ENCODE measurements at regions of chr9 and their contacts with region 1.

Region 1: DNA sequence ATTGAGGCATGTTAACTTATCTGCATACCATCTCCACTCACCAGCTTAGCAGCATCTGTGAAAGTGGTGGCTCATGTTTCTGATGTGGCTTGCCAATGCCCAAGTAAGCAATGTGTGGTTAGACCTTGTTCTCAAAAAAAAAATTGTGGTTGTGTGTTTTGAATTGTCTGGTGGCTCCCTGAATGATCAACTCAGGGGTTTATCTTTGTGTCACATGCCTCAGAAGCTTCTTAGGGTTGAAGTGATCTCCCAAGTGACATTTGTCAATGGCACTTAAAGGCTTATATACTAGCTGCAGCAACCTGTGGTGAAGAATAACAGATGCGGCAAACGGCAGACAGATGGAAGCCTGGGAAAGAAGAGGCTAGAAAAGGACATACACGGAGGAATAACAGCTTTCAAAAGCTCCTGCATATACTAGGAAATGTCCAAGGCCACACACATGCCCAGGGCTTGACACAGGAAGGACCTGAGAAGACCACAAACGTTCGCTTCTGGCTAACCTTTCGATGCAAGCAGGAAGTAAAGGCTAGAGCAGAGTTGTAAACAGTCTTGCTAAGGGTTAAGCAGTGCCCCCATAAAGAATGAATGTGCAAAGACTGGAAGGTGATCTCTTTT is 42.2 kb upstream of the FSD1L start:
- DNase-seq: peak; percentile 84
- ATAC-seq: peak; percentile 91
- H3K4me3 Mint-ChIP-seq: peak overlapping the region; percentile 65
- H3K27ac Mint-ChIP-seq: peak overlapping the region; percentile 88
- H3K4me1 Mint-ChIP-seq: peaks cover 38% of the 10 kb centered on the region
- H3K27me3 Mint-ChIP-seq: peaks cover 74% of the 10 kb centered on the region

Region 2: GRCh38 chr9:105244003-105244733 is 161.5 kb before region 1 on chr9 and contains the start of gene SLC44A1:
- CTCF ChIA-PET with region 1: interaction called, 12 read pairs
- DNase-seq: peak; percentile 94
- ATAC-seq: peak; percentile 96
- H3K4me3 Mint-ChIP-seq: peak within 1 kb of the TSS; percentile 89
- H3K27ac Mint-ChIP-seq: peak within 1 kb of the TSS; percentile 68
- H3K4me1 Mint-ChIP-seq: peaks cover 21% of the 10 kb centered on the region
- H3K27me3 Mint-ChIP-seq: peaks cover 76% of the 10 kb centered on the region
- total RNA-seq, gene SLC44A1: 4.9 to 10.3 TPM

Region 3: DNA sequence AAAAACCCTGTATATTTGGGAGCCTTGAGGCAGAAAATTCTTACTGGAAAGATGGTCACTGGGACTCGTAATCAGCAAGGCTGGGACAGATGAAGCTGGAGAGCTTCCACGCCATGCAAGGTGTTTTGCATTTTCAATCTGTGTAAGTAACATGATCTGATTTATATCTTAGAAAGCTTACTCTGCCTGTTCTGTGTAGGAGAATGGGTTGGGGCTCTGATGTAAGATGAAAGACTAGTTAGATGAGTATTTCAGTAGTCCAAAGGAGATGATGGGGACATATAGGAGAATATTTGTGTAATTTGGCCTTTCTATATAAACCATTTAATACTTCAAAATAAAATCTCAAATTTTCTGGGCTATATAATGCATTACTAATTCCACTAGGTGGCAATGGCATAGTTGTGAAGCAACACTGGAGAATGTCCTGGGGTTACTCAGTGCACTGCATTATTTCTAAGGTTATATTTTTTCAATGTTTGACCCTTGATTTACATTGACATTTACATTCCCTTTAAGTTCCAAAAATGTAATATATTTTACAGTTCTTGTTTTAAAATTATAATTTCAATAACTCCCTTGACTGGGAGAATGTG is 20.3 kb after region 1 on chr9:
- CTCF ChIA-PET with region 1: no interaction called
- DNase-seq: no peak
- ATAC-seq: peak; percentile 51
- H3K4me3 Mint-ChIP-seq: no peak overlapping the region
- H3K27ac Mint-ChIP-seq: no peak overlapping the region
- H3K4me1 Mint-ChIP-seq: no peaks in the 10 kb centered on the region
- H3K27me3 Mint-ChIP-seq: peaks cover 8% of the 10 kb centered on the region

Measured in activated CD8-positive, alpha-beta memory T cell treated with anti-CD3 and anti-CD28 coated beads, Interleukin-2, amount 10 ng/mL, durations not matched to agents 7 days and 5 days (primary cell).